Activated CD4-positive, alpha-beta T cell treated with anti-CD3 and anti-CD28 coated beads, Interleukin-2, amount 10 ng/mL, durations not matched to agents 7 days and 5 days (primary cell): ENCODE measurements at regions of chr11 and their contacts with region 1.

Region 1: DNA sequence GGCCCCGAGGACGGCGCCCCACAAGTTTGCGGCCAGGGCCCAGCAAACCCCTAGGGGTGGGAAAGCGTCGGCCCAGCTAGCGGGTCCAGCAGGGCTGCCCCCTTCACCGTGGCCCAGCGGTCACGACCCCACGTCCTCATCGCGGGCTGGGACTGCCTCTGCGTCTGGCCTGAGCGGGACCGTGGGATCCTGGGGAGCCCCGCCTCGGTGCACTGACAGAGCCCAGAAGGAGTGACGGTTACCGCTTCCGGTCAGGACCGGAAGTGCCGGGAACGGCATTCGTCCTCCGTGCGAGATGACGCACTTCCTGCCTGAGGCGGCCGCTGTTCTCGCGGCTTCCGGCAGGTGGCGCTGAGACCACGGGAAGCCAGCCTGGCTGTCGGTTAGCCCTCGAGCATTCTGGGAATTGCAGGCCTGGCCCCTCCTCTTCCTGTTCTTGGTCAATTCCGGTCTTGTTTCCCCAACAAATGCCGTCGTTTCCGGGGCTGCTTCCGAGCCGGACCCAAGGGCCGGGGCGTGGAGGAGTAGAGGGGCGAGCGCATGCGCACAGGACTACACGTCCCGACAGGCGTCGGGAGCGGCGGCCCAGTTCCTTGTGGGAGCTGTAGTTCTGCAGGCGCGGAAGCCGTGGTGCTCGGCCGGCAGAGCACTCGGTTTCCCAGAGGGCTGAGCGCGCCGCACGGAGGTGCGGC is at the start of gene TSSC4:
- DNase-seq: peak; percentile 99
- H3K4me3 Mint-ChIP-seq: peak within 1 kb of the TSS; percentile 91
- H3K27ac Mint-ChIP-seq: peak within 1 kb of the TSS; percentile 91
- H3K4me1 Mint-ChIP-seq: peaks cover 22% of the 10 kb centered on the region
- H3K27me3 Mint-ChIP-seq: no peaks in the 10 kb centered on the region
- total RNA-seq, gene TSSC4: 31.1 to 47.5 TPM

Region 2: DNA sequence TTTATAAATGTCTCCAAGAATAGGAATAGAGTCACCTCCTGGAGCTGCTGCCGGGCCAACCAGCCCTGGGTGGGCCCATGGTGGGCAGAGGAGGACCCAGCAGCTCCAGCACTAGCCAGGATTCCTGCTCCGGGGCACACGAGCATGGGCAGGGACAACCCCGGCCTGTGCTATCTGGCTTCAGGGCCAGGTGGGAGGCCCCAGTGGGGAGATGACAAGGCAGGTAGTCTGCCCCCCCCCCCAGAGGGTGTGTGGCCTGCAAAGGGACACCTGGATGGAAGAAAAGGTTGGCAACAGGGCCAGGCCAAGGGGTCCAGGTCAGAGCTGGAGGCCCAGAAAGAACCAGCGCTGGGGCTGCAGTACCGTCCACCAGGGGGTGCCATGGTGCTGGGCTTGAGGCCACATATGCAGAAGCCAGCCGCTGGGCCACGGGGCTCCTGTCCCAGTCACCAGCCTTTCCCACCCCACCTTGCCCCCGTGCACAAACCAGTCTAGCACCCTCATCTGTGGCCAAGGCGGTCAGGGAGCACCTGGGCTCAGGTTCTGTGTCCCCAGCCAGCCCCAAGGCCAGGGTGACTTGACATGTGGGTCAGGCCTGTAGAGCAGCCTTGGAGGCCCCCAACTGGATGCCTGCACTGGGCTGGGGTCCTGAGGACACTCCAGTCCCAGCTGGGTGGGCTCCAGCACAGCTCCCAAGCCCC is 94.9 kb before region 1 on chr11:
- CTCF ChIA-PET with region 1: interaction called, 24 read pairs
- POLR2A ChIA-PET with region 1: no interaction called
- DNase-seq: peak; percentile 71
- H3K4me3 Mint-ChIP-seq: peak overlapping the region; percentile 96
- H3K27ac Mint-ChIP-seq: peak overlapping the region; percentile 96
- H3K4me1 Mint-ChIP-seq: peaks cover 47% of the 10 kb centered on the region
- H3K27me3 Mint-ChIP-seq: no peaks in the 10 kb centered on the region

Region 3: DNA sequence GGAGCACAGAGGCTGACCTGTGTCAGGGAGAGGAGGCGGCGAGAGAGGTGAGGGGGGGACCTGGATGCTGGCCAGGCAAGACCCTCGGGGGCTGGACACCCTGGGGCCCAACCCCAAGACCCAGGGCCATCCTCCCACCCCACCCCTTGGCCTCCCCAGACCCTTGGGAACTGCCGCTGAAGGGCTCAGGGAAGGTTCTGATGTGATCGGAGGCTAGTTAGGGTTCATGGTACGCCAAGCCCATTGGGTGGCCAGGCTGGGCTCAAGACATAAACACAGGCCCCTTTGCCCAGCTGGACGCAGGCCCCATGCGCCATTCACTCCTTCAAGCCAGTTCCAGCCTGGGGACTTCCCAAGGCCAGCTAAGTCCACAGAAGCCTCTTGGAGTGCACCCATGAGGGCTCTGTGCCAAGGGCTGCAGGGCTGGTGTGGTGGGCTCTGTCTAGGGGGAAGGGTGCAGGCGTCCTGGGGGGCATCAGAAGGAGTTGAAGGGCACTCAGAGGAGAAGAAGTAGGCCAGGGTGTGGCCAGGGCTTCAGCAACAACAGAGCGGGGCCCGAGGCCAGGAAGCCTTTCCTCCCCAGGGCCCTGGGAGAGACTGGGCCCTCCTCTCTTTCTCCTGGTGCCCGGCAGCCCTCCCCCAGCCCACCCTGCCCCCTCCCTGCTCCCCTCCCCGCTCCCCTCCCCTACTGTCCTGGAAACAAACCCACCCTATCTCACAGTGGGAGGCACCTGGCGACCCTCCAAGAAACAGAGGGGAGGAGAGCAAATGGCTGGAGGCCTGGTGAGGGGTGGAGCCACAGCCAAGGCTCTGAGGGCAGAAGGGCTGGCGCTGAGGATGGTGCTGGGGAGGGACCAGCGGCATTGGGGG is 85.5 kb before region 1 on chr11:
- CTCF ChIA-PET with region 1: interaction called, 13 read pairs
- POLR2A ChIA-PET with region 1: no interaction called
- DNase-seq: no peak
- H3K4me3 Mint-ChIP-seq: no peak overlapping the region
- H3K27ac Mint-ChIP-seq: no peak overlapping the region
- H3K4me1 Mint-ChIP-seq: no peaks in the 10 kb centered on the region
- H3K27me3 Mint-ChIP-seq: peaks cover 1% of the 10 kb centered on the region

Region 4: GRCh38 chr11:2387266-2387987 is 12.8 kb before region 1 on chr11:
- CTCF ChIA-PET with region 1: interaction called, 38 read pairs
- POLR2A ChIA-PET with region 1: no interaction called
- DNase-seq: peak; percentile 35
- H3K4me3 Mint-ChIP-seq: no peak overlapping the region
- H3K27ac Mint-ChIP-seq: peak overlapping the region; percentile 81
- H3K4me1 Mint-ChIP-seq: peaks cover 64% of the 10 kb centered on the region
- H3K27me3 Mint-ChIP-seq: no peaks in the 10 kb centered on the region